ENCODE measurements at regions of chr3 and their contacts with region 1.

Region 1: GRCh38 chr3:114418724-114419543 is 125.1 kb downstream of the TIGIT start:
- DNase-seq: peak in 3 of 9 experiments; percentile 6 to 83 (median 71)
- ATAC-seq: peak; percentile 83
- H3K4me3 ChIP-seq: no peak overlapping the region
- H3K4me3 Mint-ChIP-seq: no peak overlapping the region
- H3K27ac ChIP-seq: no peak overlapping the region
- H3K27ac Mint-ChIP-seq: no peak overlapping the region
- H3K4me1 ChIP-seq: no peaks in the 10 kb centered on the region
- H3K4me1 Mint-ChIP-seq: peaks cover 6% of the 10 kb centered on the region
- H3K27me3 ChIP-seq: no peaks in the 10 kb centered on the region
- H3K27me3 Mint-ChIP-seq: no peaks in the 10 kb centered on the region
- CTCF ChIP-seq: peak; percentile 93

Region 2: GRCh38 chr3:113838631-113839209 is 580.2 kb before region 1 on chr3 and contains the start of gene GRAMD1C:
- CTCF ChIA-PET with region 1: interaction called, 4 read pairs
- POLR2A ChIA-PET with region 1: no interaction called
- intact Hi-C with region 1: loop called (anchors 2 to 5 kb)
- DNase-seq: peak; percentile 65 to 93 (median 85)
- ATAC-seq: peak; percentile 99
- H3K4me3 ChIP-seq: peak within 1 kb of the TSS; percentile 47 to 53
- H3K4me3 Mint-ChIP-seq: peak within 1 kb of the TSS; percentile 80
- H3K27ac ChIP-seq: no peak within 1 kb of the TSS
- H3K27ac Mint-ChIP-seq: no peak within 1 kb of the TSS
- H3K4me1 ChIP-seq: no peaks in the 10 kb centered on the region
- H3K4me1 Mint-ChIP-seq: peaks cover 9% of the 10 kb centered on the region
- H3K27me3 ChIP-seq: no peaks in the 10 kb centered on the region
- H3K27me3 Mint-ChIP-seq: no peaks in the 10 kb centered on the region
- CTCF ChIP-seq: peak; percentile 81
- total RNA-seq, gene GRAMD1C: 0.65 to 1.00 TPM

Region 3: GRCh38 chr3:114152519-114153151 is 266.3 kb before region 1 on chr3:
- CTCF ChIA-PET with region 1: interaction called, 96 read pairs
- POLR2A ChIA-PET with region 1: interaction called, 7 read pairs
- intact Hi-C with region 1: loop called (anchors 1 kb)
- DNase-seq: peak; percentile 76 to 91 (median 87)
- ATAC-seq: peak; percentile 100
- H3K4me3 ChIP-seq: peak overlapping the region; percentile 46 to 50
- H3K4me3 Mint-ChIP-seq: peak overlapping the region; percentile 73
- H3K27ac ChIP-seq: peak overlapping the region in 1 of 2 experiments; percentile 47
- H3K27ac Mint-ChIP-seq: no peak overlapping the region
- H3K4me1 ChIP-seq: peaks cover 8% of the 10 kb centered on the region
- H3K4me1 Mint-ChIP-seq: peaks cover 10% of the 10 kb centered on the region
- H3K27me3 ChIP-seq: no peaks in the 10 kb centered on the region
- H3K27me3 Mint-ChIP-seq: no peaks in the 10 kb centered on the region
- CTCF ChIP-seq: peak; percentile 99

Region 4: DNA sequence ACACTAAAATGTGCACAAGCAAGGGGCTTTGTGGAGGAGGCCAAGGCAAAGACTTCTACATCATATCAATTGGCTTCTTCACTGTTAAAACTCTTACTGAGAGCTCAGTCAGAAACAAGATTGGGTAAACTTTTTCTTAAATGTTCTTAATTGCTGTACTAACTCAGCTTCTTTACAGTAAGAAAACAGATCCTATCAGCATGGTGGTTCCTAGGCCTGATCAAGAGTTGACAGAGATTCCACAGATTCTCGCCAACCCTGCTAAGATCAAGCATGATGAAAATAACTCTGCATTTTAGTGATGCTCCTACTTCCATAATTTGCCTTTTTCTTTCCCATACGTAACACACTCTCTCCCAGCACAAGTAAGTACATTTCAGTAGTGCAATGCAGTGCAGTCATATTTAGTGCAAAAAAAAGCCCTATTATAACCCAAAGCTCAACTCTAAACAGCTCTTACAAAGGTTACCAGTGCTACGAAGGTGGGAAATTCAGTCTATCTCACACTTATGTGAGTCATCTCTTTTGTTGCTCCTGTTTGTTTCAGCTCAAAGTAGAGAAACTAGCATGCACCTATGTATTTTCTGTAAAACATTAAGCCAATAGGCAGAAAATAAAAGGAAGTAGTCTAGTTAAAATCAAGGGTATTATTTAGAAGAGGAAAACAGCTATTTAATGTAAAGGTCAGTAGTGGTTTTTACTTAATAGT is 95.2 kb before region 1 on chr3:
- CTCF ChIA-PET with region 1: interaction called, 10 read pairs
- POLR2A ChIA-PET with region 1: no interaction called
- intact Hi-C with region 1: no loop called
- DNase-seq: peak in 2 of 9 experiments; percentile 42 to 62
- ATAC-seq: peak; percentile 74
- H3K4me3 ChIP-seq: no peak overlapping the region
- H3K4me3 Mint-ChIP-seq: peak overlapping the region; percentile 3
- H3K27ac ChIP-seq: peak overlapping the region in 1 of 2 experiments; percentile 52
- H3K27ac Mint-ChIP-seq: peak overlapping the region; percentile 46
- H3K4me1 ChIP-seq: peaks cover 11% of the 10 kb centered on the region
- H3K4me1 Mint-ChIP-seq: peaks cover 64% of the 10 kb centered on the region
- H3K27me3 ChIP-seq: no peaks in the 10 kb centered on the region
- H3K27me3 Mint-ChIP-seq: no peaks in the 10 kb centered on the region
- CTCF ChIP-seq: no peak

Region 5: GRCh38 chr3:114383875-114384557 is 34.9 kb before region 1 on chr3:
- CTCF ChIA-PET with region 1: interaction called, 64 read pairs
- POLR2A ChIA-PET with region 1: interaction called, 5 read pairs
- intact Hi-C with region 1: loop called (anchors 1 kb)
- DNase-seq: peak; percentile 34 to 78 (median 65)
- ATAC-seq: peak; percentile 97
- H3K4me3 ChIP-seq: peak overlapping the region; percentile 30 to 44
- H3K4me3 Mint-ChIP-seq: peak overlapping the region; percentile 82
- H3K27ac ChIP-seq: peak overlapping the region in 1 of 2 experiments; percentile 43
- H3K27ac Mint-ChIP-seq: peak overlapping the region; percentile 82
- H3K4me1 ChIP-seq: peaks cover 6% of the 10 kb centered on the region
- H3K4me1 Mint-ChIP-seq: peaks cover 18% of the 10 kb centered on the region
- H3K27me3 ChIP-seq: no peaks in the 10 kb centered on the region
- H3K27me3 Mint-ChIP-seq: no peaks in the 10 kb centered on the region
- CTCF ChIP-seq: peak; percentile 91